WTC11 (cell line): ENCODE measurements at regions of chr16 and their contacts with region 1.

Region 1: GRCh38 chr16:85821441-85822135 is 22.1 kb downstream of the COX4I1 start:
- DNase-seq: peak; percentile 89
- ATAC-seq: peak; percentile 80
- H3K4me3 Mint-ChIP-seq: no peak overlapping the region
- H3K27ac Mint-ChIP-seq: no peak overlapping the region
- H3K4me1 Mint-ChIP-seq: peaks cover 4% of the 10 kb centered on the region; the same call in 1 of the 2 replicates
- H3K27me3 Mint-ChIP-seq: peaks cover 29% of the 10 kb centered on the region
- CTCF ChIP-seq: peak; percentile 98

Region 2: GRCh38 chr16:85536073-85536410 is 285.5 kb before region 1 on chr16:
- CTCF ChIA-PET with region 1: no interaction called
- POLR2A ChIA-PET with region 1: no interaction called
- DNase-seq: no peak
- ATAC-seq: no peak
- H3K4me3 Mint-ChIP-seq: no peak overlapping the region
- H3K27ac Mint-ChIP-seq: no peak overlapping the region
- H3K4me1 Mint-ChIP-seq: peaks cover 15% of the 10 kb centered on the region
- H3K27me3 Mint-ChIP-seq: peaks cover 5% of the 10 kb centered on the region; the same call in 1 of the 2 replicates
- CTCF ChIP-seq: no peak

Region 3: GRCh38 chr16:85869785-85870558 is 48.4 kb after region 1 on chr16:
- CTCF ChIA-PET with region 1: interaction called, 20 read pairs
- POLR2A ChIA-PET with region 1: no interaction called
- DNase-seq: no peak
- ATAC-seq: peak; percentile 87
- H3K4me3 Mint-ChIP-seq: peak overlapping the region; percentile 35
- H3K27ac Mint-ChIP-seq: peak overlapping the region; percentile 6; the same call in 1 of the 2 replicates
- H3K4me1 Mint-ChIP-seq: peaks cover 23% of the 10 kb centered on the region
- H3K27me3 Mint-ChIP-seq: peaks cover 10% of the 10 kb centered on the region; the same call in 1 of the 2 replicates
- CTCF ChIP-seq: no peak

Region 4: GRCh38 chr16:85908444-85908843 is 86.9 kb after region 1 on chr16:
- CTCF ChIA-PET with region 1: interaction called, 13 read pairs
- POLR2A ChIA-PET with region 1: no interaction called
- DNase-seq: no peak
- ATAC-seq: no peak
- H3K4me3 Mint-ChIP-seq: no peak overlapping the region
- H3K27ac Mint-ChIP-seq: no peak overlapping the region
- H3K4me1 Mint-ChIP-seq: peaks cover 19% of the 10 kb centered on the region
- H3K27me3 Mint-ChIP-seq: peaks cover 3% of the 10 kb centered on the region; the same call in 1 of the 2 replicates
- CTCF ChIP-seq: no peak

Region 5: DNA sequence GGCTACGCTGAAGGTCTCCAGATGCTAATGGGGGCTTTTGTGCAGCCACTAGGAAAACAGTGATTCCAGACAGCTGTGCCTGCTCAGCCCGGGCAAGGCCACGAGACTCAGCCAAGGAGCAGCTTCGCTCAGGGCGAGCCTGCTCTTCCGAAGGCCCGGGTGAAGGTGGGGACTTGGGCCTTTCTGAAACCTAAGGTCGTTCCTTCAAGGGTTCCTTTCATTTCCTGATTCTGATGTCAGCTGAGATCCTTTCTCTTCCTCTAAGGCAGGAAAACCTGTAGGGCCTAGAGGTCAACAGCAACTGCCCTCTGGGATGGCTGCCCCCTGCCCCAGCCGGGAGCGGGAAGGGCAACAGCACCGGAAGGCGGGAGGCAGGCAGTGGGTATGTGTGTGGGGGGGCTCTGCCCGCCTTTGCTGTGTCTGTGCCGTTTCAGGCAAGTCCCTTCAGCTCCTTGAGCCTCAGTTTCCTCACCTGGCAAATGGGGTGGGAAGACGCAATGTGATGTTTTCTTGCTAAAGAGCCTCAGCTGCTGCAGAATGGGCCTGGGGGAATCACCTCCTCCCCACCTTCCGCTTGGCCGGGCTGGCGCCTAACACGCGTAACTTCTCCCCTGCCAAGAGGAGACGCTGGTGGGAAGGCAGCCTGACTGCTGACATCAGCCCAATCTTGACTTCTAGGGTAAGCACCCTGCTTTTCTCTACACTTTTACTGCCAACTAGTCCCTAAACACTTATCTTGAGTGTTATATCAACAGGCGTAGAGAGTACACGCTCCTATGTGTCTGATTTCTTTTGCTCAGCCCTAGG is 110.2 kb after region 1 on chr16:
- CTCF ChIA-PET with region 1: interaction called, 14 read pairs
- POLR2A ChIA-PET with region 1: interaction called, 4 read pairs
- DNase-seq: no peak
- ATAC-seq: no peak
- H3K4me3 Mint-ChIP-seq: no peak overlapping the region
- H3K27ac Mint-ChIP-seq: no peak overlapping the region
- H3K4me1 Mint-ChIP-seq: peaks cover 13% of the 10 kb centered on the region
- H3K27me3 Mint-ChIP-seq: no peaks in the 10 kb centered on the region; the same call in 1 of the 2 replicates
- CTCF ChIP-seq: no peak

Region 6: DNA sequence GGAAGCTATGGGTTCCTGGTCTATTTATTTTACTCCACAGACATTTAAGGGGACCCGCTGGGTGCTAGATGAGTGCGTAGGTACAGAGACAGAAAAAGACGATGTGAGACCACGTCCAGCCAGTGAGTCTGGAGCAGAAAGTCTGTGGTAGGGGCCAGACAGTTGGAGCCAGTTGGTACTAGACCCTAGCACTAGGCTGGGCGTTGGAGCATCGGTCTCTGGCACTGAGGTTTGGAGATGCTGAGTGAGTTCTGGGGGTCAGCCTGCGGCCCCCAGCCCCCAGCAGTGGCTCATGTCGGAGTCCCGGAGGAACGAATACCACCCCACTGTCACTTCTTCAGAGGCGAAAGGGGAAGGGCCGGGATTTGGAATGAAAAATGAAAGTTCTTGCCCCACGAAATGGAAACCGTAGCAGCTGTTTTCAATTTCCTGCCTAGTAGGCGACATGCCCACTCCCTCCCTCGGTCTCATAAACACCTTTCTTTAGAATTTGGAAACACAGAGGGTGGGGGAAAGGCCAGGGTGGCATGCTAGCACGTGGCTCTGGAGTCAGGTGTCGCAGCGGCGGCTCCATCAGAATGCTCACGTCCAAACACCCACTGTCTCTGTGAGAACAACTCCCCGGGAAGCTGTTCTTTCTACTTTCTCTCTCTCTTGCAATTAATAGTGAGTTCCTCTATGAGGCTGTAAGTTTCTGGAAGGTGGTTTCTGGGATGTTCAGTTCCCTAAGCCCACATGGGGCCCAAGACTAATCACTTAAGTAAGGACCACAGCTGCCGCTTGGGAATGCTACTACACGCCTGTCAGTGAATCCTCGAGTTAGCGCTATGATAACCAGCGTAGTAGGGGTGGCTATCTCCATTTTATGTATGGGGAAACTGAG is 174.2 kb after region 1 on chr16:
- CTCF ChIA-PET with region 1: interaction called, 291 read pairs
- POLR2A ChIA-PET with region 1: no interaction called
- DNase-seq: no peak
- ATAC-seq: no peak
- H3K4me3 Mint-ChIP-seq: no peak overlapping the region
- H3K27ac Mint-ChIP-seq: no peak overlapping the region
- H3K4me1 Mint-ChIP-seq: no peaks in the 10 kb centered on the region
- H3K27me3 Mint-ChIP-seq: no peaks in the 10 kb centered on the region
- CTCF ChIP-seq: no peak

Region 7: GRCh38 chr16:86044241-86044671 is 222.7 kb after region 1 on chr16:
- CTCF ChIA-PET with region 1: interaction called, 10 read pairs
- POLR2A ChIA-PET with region 1: no interaction called
- DNase-seq: peak; percentile 85
- ATAC-seq: peak; percentile 91
- H3K4me3 Mint-ChIP-seq: no peak overlapping the region
- H3K27ac Mint-ChIP-seq: no peak overlapping the region
- H3K4me1 Mint-ChIP-seq: peaks cover 12% of the 10 kb centered on the region
- H3K27me3 Mint-ChIP-seq: no peaks in the 10 kb centered on the region; the same call in 1 of the 2 replicates
- CTCF ChIP-seq: peak; percentile 90